Heart left ventricle (tissue), 16 donors: ENCODE measurements at regions of chr7 and their contacts with region 1.

Region 1: GRCh38 chr7:92621026-92621540 is 30.9 kb upstream of the FAM133B start:
- DNase-seq: peak in 4 of 5 donors; percentile 59 to 77 (median 70)
- ATAC-seq: peak; percentile 68 to 92 (median 86)
- H3K4me3 ChIP-seq: no peak overlapping the region
- H3K27ac ChIP-seq: peak overlapping the region in 8 of 12 donors; percentile 1 to 70 (median 18)
- H3K4me1 ChIP-seq: peaks cover 0 to 31% (median 8%) of the 10 kb centered on the region in 12 donors
- H3K27me3 ChIP-seq: no peaks in the 10 kb centered on the region
- CTCF ChIP-seq: peak; percentile 64 to 85 (median 80)
- POLR2A ChIP-seq: no peak

Region 2: DNA sequence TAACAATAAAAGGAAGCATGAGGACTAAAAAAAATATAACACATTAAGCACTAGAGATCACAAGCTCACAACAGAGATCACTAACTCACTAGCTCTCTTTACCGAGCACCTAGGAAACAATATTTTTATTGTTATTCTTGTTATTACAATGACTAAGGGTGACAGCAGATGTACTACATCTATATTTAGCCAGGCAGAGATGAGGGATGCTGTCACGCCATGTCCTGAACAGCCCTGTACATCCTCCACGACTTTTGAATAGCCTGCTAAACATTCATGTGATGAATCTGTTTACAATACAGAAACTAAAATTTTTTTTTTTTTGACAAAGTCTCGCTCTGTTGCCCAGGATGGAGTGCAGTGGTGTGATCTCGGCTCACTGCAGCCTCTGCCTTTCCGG is 53.6 kb before region 1 on chr7:
- intact Hi-C with region 1: no loop called
- DNase-seq: no peak
- ATAC-seq: peak in 2 of 4 donors; percentile 37 to 39
- H3K4me3 ChIP-seq: no peak overlapping the region
- H3K27ac ChIP-seq: no peak overlapping the region
- H3K4me1 ChIP-seq: no peaks in the 10 kb centered on the region
- H3K27me3 ChIP-seq: no peaks in the 10 kb centered on the region
- CTCF ChIP-seq: no peak
- POLR2A ChIP-seq: no peak

Region 3: DNA sequence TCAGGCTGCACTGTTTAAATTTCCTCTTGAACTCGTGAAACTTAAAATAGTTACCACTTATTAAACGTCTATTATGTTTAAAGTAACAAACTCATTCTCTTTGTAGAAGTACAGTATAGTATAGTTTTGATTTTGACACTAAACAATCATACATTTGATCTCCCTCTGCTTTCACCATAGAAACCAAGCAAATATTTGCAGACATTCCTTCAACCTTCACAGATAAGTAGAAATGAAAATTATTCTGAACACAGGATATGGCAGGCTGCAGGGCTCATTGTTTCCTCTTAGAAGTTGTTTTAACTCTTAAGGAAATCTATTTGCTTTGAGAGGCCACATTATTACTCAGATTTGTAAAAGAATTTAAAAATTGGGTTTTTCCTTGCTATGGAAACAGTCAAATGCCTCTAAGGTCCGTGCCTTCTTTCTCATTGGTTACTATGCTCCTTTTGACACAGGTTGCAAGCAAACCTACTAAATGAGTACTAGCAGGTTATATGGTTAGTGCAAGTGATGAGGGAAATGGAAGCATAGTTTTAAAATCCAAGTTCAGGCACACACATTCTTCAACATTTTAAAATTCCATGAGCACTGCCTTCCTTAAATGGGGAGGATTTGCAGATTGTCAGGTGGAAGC is 61.9 kb after region 1 on chr7:
- intact Hi-C with region 1: loop called in 1 of 10 experiments (anchors 5 kb)
- DNase-seq: no peak
- ATAC-seq: no peak
- H3K4me3 ChIP-seq: no peak overlapping the region
- H3K27ac ChIP-seq: peak overlapping the region in 2 of 12 donors; percentile 2 to 56
- H3K4me1 ChIP-seq: peaks cover 0 to 51% (median 18%) of the 10 kb centered on the region in 12 donors
- H3K27me3 ChIP-seq: no peaks in the 10 kb centered on the region
- CTCF ChIP-seq: no peak
- POLR2A ChIP-seq: no peak

Region 4: GRCh38 chr7:92988051-92988450 is 367.0 kb after region 1 on chr7:
- intact Hi-C with region 1: loop called in 4 of 10 experiments (anchors 5 to 10 kb)
- DNase-seq: no peak
- ATAC-seq: no peak
- H3K4me3 ChIP-seq: no peak overlapping the region
- H3K27ac ChIP-seq: no peak overlapping the region
- H3K4me1 ChIP-seq: no peaks in the 10 kb centered on the region
- H3K27me3 ChIP-seq: no peaks in the 10 kb centered on the region
- CTCF ChIP-seq: peak in 10 of 12 donors; percentile 8 to 50 (median 30)
- POLR2A ChIP-seq: no peak

Region 5: DNA sequence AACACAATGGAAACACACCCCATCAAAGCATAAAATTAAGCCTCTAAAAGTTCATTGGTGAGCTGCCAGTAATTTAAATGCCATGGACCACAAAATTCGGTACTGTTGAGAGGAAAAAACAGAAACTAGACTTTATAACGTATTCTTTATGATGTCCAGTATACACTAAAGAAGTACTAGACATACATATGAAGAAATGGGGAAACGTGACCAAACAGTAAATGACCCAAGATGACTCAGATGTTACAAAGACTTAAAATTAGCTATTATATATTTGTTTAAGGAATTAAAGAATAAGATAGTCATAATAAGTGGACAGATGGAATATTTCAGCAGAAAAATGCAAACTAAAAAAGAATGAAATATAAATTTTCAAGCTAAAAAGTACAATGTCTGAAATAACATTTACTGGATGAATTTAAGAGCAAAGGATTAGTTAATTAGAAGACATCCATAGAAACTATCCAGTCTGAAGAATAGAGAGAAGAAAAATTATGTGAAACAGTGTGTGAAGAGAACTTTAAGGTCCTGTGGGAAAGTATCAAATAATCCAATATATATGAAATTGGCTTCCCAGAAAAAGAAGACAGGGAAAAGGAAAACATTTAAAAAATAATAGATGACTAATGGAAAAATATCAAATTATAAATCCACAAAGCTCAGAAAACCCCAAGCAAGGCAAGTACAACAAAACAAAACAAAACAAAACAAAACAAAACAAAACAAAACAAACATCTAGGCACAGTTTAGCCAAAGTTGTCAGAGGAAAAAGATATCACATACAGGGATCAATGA is 427.2 kb after region 1 on chr7:
- intact Hi-C with region 1: loop called in 3 of 10 experiments (anchors 2 to 5 kb)
- DNase-seq: no peak
- ATAC-seq: no peak
- H3K4me3 ChIP-seq: no peak overlapping the region
- H3K27ac ChIP-seq: no peak overlapping the region
- H3K4me1 ChIP-seq: peaks cover 0 to 3% (median 0%) of the 10 kb centered on the region in 12 donors
- H3K27me3 ChIP-seq: no peaks in the 10 kb centered on the region
- CTCF ChIP-seq: no peak
- POLR2A ChIP-seq: no peak

Region 6: DNA sequence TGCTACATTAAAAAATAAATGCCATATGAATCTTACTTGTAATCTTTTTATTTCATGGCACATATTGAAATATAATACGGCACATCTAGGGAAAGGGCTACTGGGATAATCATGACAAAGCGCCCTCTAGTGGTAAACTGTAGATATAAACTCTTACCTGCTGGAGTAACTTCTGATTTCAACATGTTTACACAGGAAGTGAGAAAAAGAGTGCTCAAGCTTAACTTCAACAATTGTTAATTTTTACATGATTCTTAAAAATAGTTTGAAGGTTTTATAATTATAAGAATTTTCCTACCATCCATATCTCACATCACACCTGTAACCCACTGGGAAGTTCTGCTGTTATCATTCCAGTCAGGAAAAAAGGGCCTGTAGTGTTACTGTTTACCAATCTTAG is 607.2 kb after region 1 on chr7:
- intact Hi-C with region 1: loop called in 1 of 10 experiments (anchors 5 kb)
- DNase-seq: no peak
- ATAC-seq: no peak
- H3K4me3 ChIP-seq: no peak overlapping the region
- H3K27ac ChIP-seq: no peak overlapping the region
- H3K4me1 ChIP-seq: peaks cover 0 to 21% (median 7%) of the 10 kb centered on the region in 12 donors
- H3K27me3 ChIP-seq: no peaks in the 10 kb centered on the region
- CTCF ChIP-seq: peak; percentile 58 to 88 (median 79)
- POLR2A ChIP-seq: no peak